GM12878 (cell line): ENCODE measurements at regions of chrX and their contacts with region 1.

Region 1: DNA sequence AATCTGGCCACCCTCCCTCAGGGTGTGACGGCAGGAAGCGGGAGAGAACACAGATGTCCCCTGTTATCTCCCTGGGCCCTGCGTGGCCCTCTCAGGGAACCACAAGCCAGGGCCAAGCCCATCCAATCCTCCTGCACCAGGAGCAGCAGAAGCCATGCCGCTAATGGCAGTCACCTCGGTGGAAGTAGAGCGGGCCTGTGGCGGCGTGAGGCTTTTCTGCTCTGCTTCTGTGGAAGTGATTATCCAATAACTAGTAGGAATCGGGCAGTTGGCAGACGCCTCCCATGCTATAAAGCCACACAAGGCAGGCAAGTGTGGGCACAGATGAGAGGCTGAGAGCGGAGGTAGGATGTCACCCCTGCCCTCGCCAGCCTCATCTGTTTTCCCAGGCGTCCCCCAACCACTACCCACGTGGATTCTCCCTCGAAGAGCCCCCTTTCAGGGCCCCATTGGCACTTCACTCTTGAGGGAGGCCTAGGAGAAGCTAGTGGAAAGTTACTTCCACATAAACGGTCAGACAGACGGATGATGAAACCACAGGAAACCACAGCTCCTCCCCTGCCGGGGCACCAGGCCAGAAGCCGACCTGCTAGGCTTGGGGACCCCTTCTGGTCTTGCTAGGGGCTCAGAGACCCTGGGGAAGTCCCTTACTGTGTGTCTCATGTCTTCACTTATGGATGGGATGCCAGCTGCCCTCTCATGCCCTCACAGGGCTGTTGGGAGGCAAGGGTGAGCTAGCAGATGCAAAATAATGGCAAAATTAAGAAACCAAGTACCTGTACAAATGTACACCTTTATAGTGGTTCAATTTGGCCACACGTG is 18.8 kb upstream of the TMSB4X start:
- DNase-seq: peak; percentile 77
- ATAC-seq: peak; percentile 59
- H3K4me3 ChIP-seq: peak overlapping the region; percentile 32
- H3K27ac ChIP-seq: peak overlapping the region; percentile 99
- H3K4me1 ChIP-seq: peaks cover 42% of the 10 kb centered on the region
- H3K27me3 ChIP-seq: no peaks in the 10 kb centered on the region
- CTCF ChIP-seq: no peak
- EP300 ChIP-seq: peak; percentile 48 to 62; a peak in 2 of 4 replicates
- POLR2A ChIP-seq: peak; percentile 30
- RAD21 ChIP-seq: no peak

Region 2: DNA sequence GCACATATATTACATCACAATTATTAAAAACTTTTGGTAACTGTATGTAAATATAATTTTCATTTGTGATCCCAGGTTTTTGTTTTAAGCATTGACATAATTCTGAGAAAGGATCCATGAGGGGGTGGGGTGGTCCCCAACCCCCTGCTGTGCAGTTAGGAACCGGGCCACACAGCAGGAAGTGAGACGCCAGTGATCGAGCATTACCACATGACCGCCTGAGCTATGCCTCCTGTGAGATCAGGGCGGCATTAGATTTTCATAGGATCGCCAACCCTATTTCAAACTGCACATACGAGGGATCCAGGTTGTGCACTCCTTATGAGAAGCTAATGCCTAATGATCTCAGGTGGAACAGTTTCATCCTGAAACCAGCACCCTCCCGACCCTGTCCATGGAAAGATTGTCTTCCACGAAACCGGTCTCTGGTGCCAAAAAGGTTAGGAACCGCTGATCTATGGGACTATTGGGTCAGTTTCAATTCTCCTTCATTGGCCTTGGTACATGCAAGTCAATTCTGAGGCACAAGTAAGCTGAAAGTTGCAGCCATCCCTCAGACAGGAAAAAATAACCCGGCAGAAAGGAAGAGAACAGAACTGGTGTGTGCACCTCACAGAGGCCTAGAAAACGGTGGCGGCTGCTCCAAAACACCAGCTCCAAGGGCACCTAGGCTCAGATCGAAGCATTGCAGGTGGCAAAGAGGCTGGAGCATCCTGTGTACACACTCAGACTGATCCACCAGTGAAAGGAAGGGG is 11.8 kb after region 1 on chrX:
- CTCF ChIA-PET with region 1: interaction called, 20 read pairs
- POLR2A ChIA-PET with region 1: interaction called, 138 read pairs
- RAD21 ChIA-PET with region 1: interaction called, 186 read pairs
- SMC1A ChIA-PET with region 1: interaction called, 351 read pairs
- in situ Hi-C with region 1: no loop called
- intact Hi-C with region 1: no loop called
- DNase-seq: no peak
- ATAC-seq: no peak
- H3K4me3 ChIP-seq: no peak overlapping the region
- H3K27ac ChIP-seq: peak overlapping the region; percentile 10
- H3K4me1 ChIP-seq: peaks cover 11% of the 10 kb centered on the region
- H3K27me3 ChIP-seq: no peaks in the 10 kb centered on the region
- CTCF ChIP-seq: no peak
- EP300 ChIP-seq: no peak
- POLR2A ChIP-seq: no peak
- RAD21 ChIP-seq: no peak

Region 3: GRCh38 chrX:12974796-12975669 is 18.9 kb after region 1 on chrX and contains the start of gene TMSB4X:
- CTCF ChIA-PET with region 1: interaction called, 20 read pairs
- POLR2A ChIA-PET with region 1: interaction called, 138 read pairs
- RAD21 ChIA-PET with region 1: interaction called, 186 read pairs
- SMC1A ChIA-PET with region 1: interaction called, 351 read pairs
- in situ Hi-C with region 1: no loop called
- intact Hi-C with region 1: no loop called
- DNase-seq: no peak
- ATAC-seq: peak; percentile 35
- H3K4me3 ChIP-seq: peak within 1 kb of the TSS; percentile 81
- H3K27ac ChIP-seq: peak within 1 kb of the TSS; percentile 90
- H3K4me1 ChIP-seq: peaks cover 6% of the 10 kb centered on the region; the same call in 1 of the 2 replicates
- H3K27me3 ChIP-seq: no peaks in the 10 kb centered on the region
- CTCF ChIP-seq: no peak
- EP300 ChIP-seq: no peak
- POLR2A ChIP-seq: peak; percentile 97
- RAD21 ChIP-seq: no peak
- polyA plus RNA-seq, gene TMSB4X: 32,576 to 35,408 TPM

Region 4: GRCh38 chrX:12984629-12985319 is 28.7 kb after region 1 on chrX:
- CTCF ChIA-PET with region 1: interaction called, 8 read pairs
- POLR2A ChIA-PET with region 1: interaction called, 138 read pairs
- RAD21 ChIA-PET with region 1: interaction called, 186 read pairs
- SMC1A ChIA-PET with region 1: interaction called, 351 read pairs
- in situ Hi-C with region 1: no loop called
- intact Hi-C with region 1: no loop called
- DNase-seq: no peak
- ATAC-seq: peak; percentile 74
- H3K4me3 ChIP-seq: peak overlapping the region; percentile 26; the same call in 1 of the 2 replicates
- H3K27ac ChIP-seq: peak overlapping the region; percentile 98
- H3K4me1 ChIP-seq: peaks cover 68% of the 10 kb centered on the region
- H3K27me3 ChIP-seq: no peaks in the 10 kb centered on the region
- CTCF ChIP-seq: no peak
- EP300 ChIP-seq: peak; percentile 68 to 87; a peak in 3 of 4 replicates
- POLR2A ChIP-seq: no peak
- RAD21 ChIP-seq: no peak; the same call in 1 of the 2 replicates